Activated CD4-positive, alpha-beta memory T cell treated with anti-CD3 and anti-CD28 coated beads, Interleukin-2, amount 10 ng/mL, durations not matched to agents 7 days and 5 days (primary cell): ENCODE measurements at regions of chr14 and their contacts with region 1.

Region 1: GRCh38 chr14:35416108-35416750 is 11.7 kb upstream of the NFKBIA start:
- DNase-seq: peak; percentile 62
- H3K4me3 Mint-ChIP-seq: peak overlapping the region; percentile 18
- H3K27ac Mint-ChIP-seq: peak overlapping the region; percentile 75
- H3K4me1 Mint-ChIP-seq: peaks cover 47% of the 10 kb centered on the region
- H3K27me3 Mint-ChIP-seq: no peaks in the 10 kb centered on the region

Region 2: GRCh38 chr14:35121887-35122695 is 294.1 kb before region 1 on chr14 and contains the starts of genes PPP2R3C and PRORP:
- CTCF ChIA-PET with region 1: interaction called, 5 read pairs
- POLR2A ChIA-PET with region 1: interaction called, 25 read pairs
- DNase-seq: peak; percentile 92
- H3K4me3 Mint-ChIP-seq: peak within 1 kb of the TSS; percentile 91
- H3K27ac Mint-ChIP-seq: peak within 1 kb of the TSS; percentile 98
- H3K4me1 Mint-ChIP-seq: peaks cover 59% of the 10 kb centered on the region
- H3K27me3 Mint-ChIP-seq: no peaks in the 10 kb centered on the region
- total RNA-seq, gene PPP2R3C: 51.7 to 59.4 TPM
- total RNA-seq, gene PRORP: 43.3 to 44.9 TPM

Region 3: GRCh38 chr14:35140718-35141581 is 275.3 kb before region 1 on chr14:
- CTCF ChIA-PET with region 1: interaction called, 33 read pairs
- POLR2A ChIA-PET with region 1: interaction called, 4 read pairs
- DNase-seq: no peak
- H3K4me3 Mint-ChIP-seq: no peak overlapping the region
- H3K27ac Mint-ChIP-seq: no peak overlapping the region
- H3K4me1 Mint-ChIP-seq: peaks cover 9% of the 10 kb centered on the region
- H3K27me3 Mint-ChIP-seq: no peaks in the 10 kb centered on the region

Region 4: DNA sequence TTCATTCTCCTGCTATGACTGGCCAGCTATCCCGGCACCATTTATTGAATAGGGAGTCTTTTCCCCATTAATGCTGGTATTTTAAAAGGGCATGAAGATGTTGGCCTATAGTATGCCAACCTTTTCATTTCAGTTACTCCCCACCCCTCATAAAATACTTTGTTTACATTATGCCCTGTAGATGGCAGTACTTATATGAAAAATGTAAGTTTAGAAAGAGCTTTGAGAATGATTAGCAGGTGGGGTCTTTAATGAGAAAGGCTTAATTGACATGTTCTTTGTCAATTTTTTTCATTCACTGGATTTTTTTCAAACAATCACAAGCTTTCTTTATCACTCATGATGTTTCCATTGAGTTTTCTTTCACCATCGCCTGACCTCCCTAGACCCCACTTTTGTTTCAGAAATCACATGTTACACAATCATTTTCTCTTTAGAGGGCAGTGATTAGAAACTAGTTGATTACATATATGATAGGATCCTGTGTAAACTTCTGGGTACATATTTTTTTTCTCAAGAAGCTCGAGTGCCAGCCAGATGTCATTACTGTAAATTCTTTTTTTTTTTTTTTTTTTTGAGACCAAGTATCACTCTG is 186.6 kb before region 1 on chr14:
- CTCF ChIA-PET with region 1: interaction called, 45 read pairs
- POLR2A ChIA-PET with region 1: interaction called, 8 read pairs
- DNase-seq: no peak
- H3K4me3 Mint-ChIP-seq: no peak overlapping the region
- H3K27ac Mint-ChIP-seq: no peak overlapping the region
- H3K4me1 Mint-ChIP-seq: peaks cover 19% of the 10 kb centered on the region
- H3K27me3 Mint-ChIP-seq: no peaks in the 10 kb centered on the region

Region 5: DNA sequence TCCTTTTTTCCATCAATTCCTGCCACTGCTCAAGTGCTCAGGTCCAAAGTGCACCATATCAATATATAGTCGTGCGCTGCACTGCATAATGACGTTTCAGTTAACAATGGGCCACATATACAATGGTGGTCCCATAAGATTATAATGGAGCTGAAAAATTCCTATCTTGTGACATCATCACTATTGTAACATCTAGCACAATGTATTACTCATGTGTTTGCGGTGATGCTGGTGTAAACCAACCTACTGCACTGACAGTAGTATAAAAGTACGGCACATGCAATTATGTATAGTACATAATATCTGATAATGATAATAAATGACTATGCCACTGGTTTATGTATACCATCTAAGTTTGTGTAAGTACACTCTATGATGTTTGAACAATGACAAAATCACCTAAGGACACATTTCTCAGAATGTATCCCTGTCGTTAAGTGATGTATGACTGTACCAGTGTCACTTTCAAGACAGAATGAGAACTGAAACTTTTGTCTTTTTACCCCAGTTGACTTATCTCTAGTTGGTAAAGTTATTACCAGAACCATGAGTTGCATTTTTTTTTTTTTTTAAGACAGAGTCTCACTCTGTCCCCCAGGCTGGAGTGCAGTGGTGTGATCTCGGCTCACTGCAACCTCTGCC is 64.0 kb after region 1 on chr14:
- CTCF ChIA-PET with region 1: no interaction called
- POLR2A ChIA-PET with region 1: no interaction called
- DNase-seq: no peak
- H3K4me3 Mint-ChIP-seq: no peak overlapping the region
- H3K27ac Mint-ChIP-seq: no peak overlapping the region
- H3K4me1 Mint-ChIP-seq: peaks cover 11% of the 10 kb centered on the region
- H3K27me3 Mint-ChIP-seq: peaks cover 4% of the 10 kb centered on the region

Region 6: GRCh38 chr14:35526962-35527361 is 110.7 kb after region 1 on chr14:
- CTCF ChIA-PET with region 1: no interaction called
- POLR2A ChIA-PET with region 1: no interaction called
- DNase-seq: no peak
- H3K4me3 Mint-ChIP-seq: no peak overlapping the region
- H3K27ac Mint-ChIP-seq: no peak overlapping the region
- H3K4me1 Mint-ChIP-seq: no peaks in the 10 kb centered on the region
- H3K27me3 Mint-ChIP-seq: peaks cover 36% of the 10 kb centered on the region